ENCODE measurements at regions of chr2 and their contacts with region 1.

Region 1: GRCh38 chr2:24827321-24828237 is 34.4 kb downstream of the CENPO start:
- DNase-seq: peak; percentile 78 to 89 (median 83)
- H3K4me3 ChIP-seq: no peak overlapping the region
- H3K27ac ChIP-seq: no peak overlapping the region
- H3K4me1 ChIP-seq: no peaks in the 10 kb centered on the region
- H3K27me3 ChIP-seq: no peaks in the 10 kb centered on the region
- CTCF ChIP-seq: peak; percentile 81 to 85 (median 83)
- EP300 ChIP-seq: no peak
- POLR2A ChIP-seq: no peak

Region 2: GRCh38 chr2:24409700-24410556 is 417.7 kb before region 1 on chr2:
- intact Hi-C with region 1: loop called (anchors 2 to 5 kb)
- DNase-seq: peak in 1 of 5 donors; percentile 59
- H3K4me3 ChIP-seq: no peak overlapping the region
- H3K27ac ChIP-seq: no peak overlapping the region
- H3K4me1 ChIP-seq: no peaks in the 10 kb centered on the region
- H3K27me3 ChIP-seq: no peaks in the 10 kb centered on the region
- CTCF ChIP-seq: peak; percentile 46 to 84 (median 78)
- EP300 ChIP-seq: no peak
- POLR2A ChIP-seq: no peak